ENCODE measurements at regions of chr9 and their contacts with region 1.

Region 1: GRCh38 chr9:33816327-33817252 is at the start of gene UBE2R2:
- DNase-seq: peak; percentile 89 to 96
- H3K4me3 ChIP-seq: peak within 1 kb of the TSS; percentile 89
- H3K4me3 Mint-ChIP-seq: peak within 1 kb of the TSS; percentile 90
- H3K27ac Mint-ChIP-seq: peak within 1 kb of the TSS; percentile 91
- H3K4me1 ChIP-seq: peaks cover 34% of the 10 kb centered on the region
- H3K4me1 Mint-ChIP-seq: peaks cover 20% of the 10 kb centered on the region
- H3K27me3 ChIP-seq: no peaks in the 10 kb centered on the region
- H3K27me3 Mint-ChIP-seq: no peaks in the 10 kb centered on the region
- CTCF ChIP-seq: no peak
- total RNA-seq, gene UBE2R2: 48.1 and 52.3 TPM in 2 replicates

Region 2: GRCh38 chr9:33852216-33852826 is 35.7 kb after region 1 on chr9:
- CTCF ChIA-PET with region 1: interaction called, 55 read pairs
- POLR2A ChIA-PET with region 1: interaction called, 3 read pairs
- intact Hi-C with region 1: loop called (anchors 1 kb)
- DNase-seq: peak; percentile 65 to 73
- H3K4me3 ChIP-seq: no peak overlapping the region
- H3K4me3 Mint-ChIP-seq: no peak overlapping the region
- H3K27ac Mint-ChIP-seq: no peak overlapping the region
- H3K4me1 ChIP-seq: peaks cover 2% of the 10 kb centered on the region; the same call in 1 of the 2 replicates
- H3K4me1 Mint-ChIP-seq: peaks cover 23% of the 10 kb centered on the region
- H3K27me3 ChIP-seq: no peaks in the 10 kb centered on the region
- H3K27me3 Mint-ChIP-seq: no peaks in the 10 kb centered on the region
- CTCF ChIP-seq: peak; percentile 60 to 69

Region 3: GRCh38 chr9:33924978-33925797 is 108.6 kb after region 1 on chr9:
- CTCF ChIA-PET with region 1: interaction called, 3 read pairs
- POLR2A ChIA-PET with region 1: no interaction called
- intact Hi-C with region 1: loop called (anchors 10 kb)
- DNase-seq: peak in 1 of 2 experiments; percentile 67
- H3K4me3 ChIP-seq: no peak overlapping the region
- H3K4me3 Mint-ChIP-seq: no peak overlapping the region
- H3K27ac Mint-ChIP-seq: peak overlapping the region; percentile 21
- H3K4me1 ChIP-seq: no peaks in the 10 kb centered on the region
- H3K4me1 Mint-ChIP-seq: no peaks in the 10 kb centered on the region
- H3K27me3 ChIP-seq: no peaks in the 10 kb centered on the region
- H3K27me3 Mint-ChIP-seq: no peaks in the 10 kb centered on the region
- CTCF ChIP-seq: peak; percentile 39 to 66

Region 4: GRCh38 chr9:34102796-34103195 is 286.2 kb after region 1 on chr9:
- CTCF ChIA-PET with region 1: no interaction called
- POLR2A ChIA-PET with region 1: no interaction called
- intact Hi-C with region 1: no loop called
- DNase-seq: no peak
- H3K4me3 ChIP-seq: no peak overlapping the region
- H3K4me3 Mint-ChIP-seq: no peak overlapping the region
- H3K27ac Mint-ChIP-seq: no peak overlapping the region
- H3K4me1 ChIP-seq: no peaks in the 10 kb centered on the region
- H3K4me1 Mint-ChIP-seq: no peaks in the 10 kb centered on the region
- H3K27me3 ChIP-seq: no peaks in the 10 kb centered on the region
- H3K27me3 Mint-ChIP-seq: no peaks in the 10 kb centered on the region
- CTCF ChIP-seq: no peak

Region 5: GRCh38 chr9:34384368-34385165 is 568.0 kb after region 1 on chr9:
- CTCF ChIA-PET with region 1: no interaction called
- POLR2A ChIA-PET with region 1: no interaction called
- intact Hi-C with region 1: no loop called
- DNase-seq: peak; percentile 10 to 27
- H3K4me3 ChIP-seq: no peak overlapping the region
- H3K4me3 Mint-ChIP-seq: no peak overlapping the region
- H3K27ac Mint-ChIP-seq: peak overlapping the region; percentile 17
- H3K4me1 ChIP-seq: peaks cover 8% of the 10 kb centered on the region
- H3K4me1 Mint-ChIP-seq: peaks cover 15% of the 10 kb centered on the region
- H3K27me3 ChIP-seq: no peaks in the 10 kb centered on the region
- H3K27me3 Mint-ChIP-seq: peaks cover 3% of the 10 kb centered on the region
- CTCF ChIP-seq: no peak

Measured in Caco-2 (cell line).